ENCODE measurements at regions of chr17 and their contacts with region 1.

Region 1: GRCh38 chr17:76278952-76279741 is 14.0 kb downstream of the UBALD2 start:
- DNase-seq: peak; percentile 92
- ATAC-seq: peak; percentile 81
- H3K4me3 Mint-ChIP-seq: no peak overlapping the region
- H3K27ac Mint-ChIP-seq: no peak overlapping the region
- H3K4me1 Mint-ChIP-seq: peaks cover 25% of the 10 kb centered on the region
- H3K27me3 Mint-ChIP-seq: no peaks in the 10 kb centered on the region

Region 2: GRCh38 chr17:75904749-75905521 is 374.2 kb before region 1 on chr17 and contains the start of gene MRPL38:
- CTCF ChIA-PET with region 1: no interaction called
- POLR2A ChIA-PET with region 1: no interaction called
- intact Hi-C with region 1: loop called in 1 of 2 experiments (anchors 10 kb)
- DNase-seq: peak; percentile 97
- ATAC-seq: peak; percentile 99
- H3K4me3 Mint-ChIP-seq: peak within 1 kb of the TSS; percentile 86
- H3K27ac Mint-ChIP-seq: peak within 1 kb of the TSS; percentile 89
- H3K4me1 Mint-ChIP-seq: peaks cover 5% of the 10 kb centered on the region
- H3K27me3 Mint-ChIP-seq: no peaks in the 10 kb centered on the region
- total RNA-seq, gene MRPL38: 98.0 to 115 TPM

Region 3: GRCh38 chr17:76077516-76078110 is 201.5 kb before region 1 on chr17:
- CTCF ChIA-PET with region 1: interaction called, 4 read pairs
- POLR2A ChIA-PET with region 1: interaction called, 12 read pairs
- intact Hi-C with region 1: no loop called
- DNase-seq: no peak
- ATAC-seq: no peak
- H3K4me3 Mint-ChIP-seq: no peak overlapping the region
- H3K27ac Mint-ChIP-seq: no peak overlapping the region
- H3K4me1 Mint-ChIP-seq: peaks cover 44% of the 10 kb centered on the region
- H3K27me3 Mint-ChIP-seq: peaks cover 40% of the 10 kb centered on the region

Region 4: DNA sequence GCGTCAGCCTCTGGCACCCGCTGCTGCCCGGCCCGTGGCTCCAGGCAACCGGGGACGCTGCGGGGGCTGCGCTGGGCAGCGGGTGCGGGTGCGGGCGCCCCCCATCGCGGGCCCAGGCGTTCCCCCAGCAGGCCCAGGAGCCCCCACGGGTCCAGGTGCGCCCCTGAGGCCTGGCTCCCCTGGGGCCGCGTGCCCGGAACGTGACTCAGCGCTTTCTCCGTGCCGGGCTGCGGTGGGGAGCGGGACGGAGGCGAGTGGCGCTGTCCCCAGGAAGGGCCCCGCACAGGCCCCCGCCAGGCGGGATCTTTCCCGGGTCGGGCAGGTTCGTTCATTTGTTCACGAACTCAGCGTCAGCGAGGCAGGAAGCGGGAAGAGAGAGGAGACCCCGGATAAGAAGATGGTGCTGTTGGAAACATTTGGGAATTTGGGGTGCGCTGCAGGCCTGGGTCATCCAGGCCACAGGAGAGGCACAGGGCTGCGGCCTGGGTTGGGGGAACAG is 157.2 kb before region 1 on chr17:
- CTCF ChIA-PET with region 1: interaction called, 150 read pairs
- POLR2A ChIA-PET with region 1: interaction called, 9 read pairs
- intact Hi-C with region 1: loop called (anchors 1 kb)
- DNase-seq: peak; percentile 61
- ATAC-seq: peak; percentile 20
- H3K4me3 Mint-ChIP-seq: no peak overlapping the region
- H3K27ac Mint-ChIP-seq: peak overlapping the region; percentile 80
- H3K4me1 Mint-ChIP-seq: peaks cover 14% of the 10 kb centered on the region
- H3K27me3 Mint-ChIP-seq: no peaks in the 10 kb centered on the region

Region 5: GRCh38 chr17:76141212-76142038 is 137.7 kb before region 1 on chr17 and contains the start of gene FOXJ1:
- CTCF ChIA-PET with region 1: interaction called, 29 read pairs
- POLR2A ChIA-PET with region 1: no interaction called
- intact Hi-C with region 1: no loop called
- DNase-seq: peak; percentile 93
- ATAC-seq: peak; percentile 80
- H3K4me3 Mint-ChIP-seq: peak within 1 kb of the TSS; percentile 64
- H3K27ac Mint-ChIP-seq: no peak within 1 kb of the TSS
- H3K4me1 Mint-ChIP-seq: peaks cover 51% of the 10 kb centered on the region
- H3K27me3 Mint-ChIP-seq: peaks cover 9% of the 10 kb centered on the region
- total RNA-seq, gene FOXJ1: 0.47 to 0.53 TPM

Region 6: GRCh38 chr17:76182016-76182764 is 97.0 kb before region 1 on chr17:
- CTCF ChIA-PET with region 1: interaction called, 40 read pairs
- POLR2A ChIA-PET with region 1: interaction called, 5 read pairs
- intact Hi-C with region 1: no loop called
- DNase-seq: peak; percentile 98
- ATAC-seq: peak; percentile 76
- H3K4me3 Mint-ChIP-seq: peak overlapping the region; percentile 6
- H3K27ac Mint-ChIP-seq: peak overlapping the region; percentile 90
- H3K4me1 Mint-ChIP-seq: peaks cover 66% of the 10 kb centered on the region
- H3K27me3 Mint-ChIP-seq: no peaks in the 10 kb centered on the region

Region 7: DNA sequence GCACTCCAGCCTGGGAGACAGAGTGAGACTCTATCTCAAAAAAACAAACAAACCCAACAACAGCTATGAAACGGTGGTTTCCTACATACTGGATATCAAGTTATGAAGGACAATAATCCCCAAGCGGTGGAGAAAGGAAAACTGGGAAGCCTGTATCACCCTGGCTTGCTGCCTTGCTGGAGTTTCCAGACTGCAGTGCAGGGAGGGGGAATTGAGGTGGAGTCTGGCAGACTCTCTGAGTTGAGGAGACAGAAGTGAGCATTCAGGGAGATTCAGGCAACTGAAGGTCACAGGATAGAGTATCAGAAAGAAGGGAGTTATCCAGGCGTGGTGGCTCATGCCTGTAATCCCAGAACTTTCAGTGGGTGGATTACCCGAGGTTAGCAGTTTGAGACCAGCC is 17.0 kb after region 1 on chr17:
- CTCF ChIA-PET with region 1: interaction called, 17 read pairs
- POLR2A ChIA-PET with region 1: no interaction called
- intact Hi-C with region 1: no loop called
- DNase-seq: no peak
- ATAC-seq: no peak
- H3K4me3 Mint-ChIP-seq: no peak overlapping the region
- H3K27ac Mint-ChIP-seq: no peak overlapping the region
- H3K4me1 Mint-ChIP-seq: no peaks in the 10 kb centered on the region
- H3K27me3 Mint-ChIP-seq: no peaks in the 10 kb centered on the region

Region 8: GRCh38 chr17:76370261-76370993 is 91.3 kb after region 1 on chr17:
- CTCF ChIA-PET with region 1: no interaction called
- POLR2A ChIA-PET with region 1: no interaction called
- intact Hi-C with region 1: no loop called
- DNase-seq: peak; percentile 35
- ATAC-seq: no peak
- H3K4me3 Mint-ChIP-seq: no peak overlapping the region
- H3K27ac Mint-ChIP-seq: no peak overlapping the region
- H3K4me1 Mint-ChIP-seq: peaks cover 4% of the 10 kb centered on the region
- H3K27me3 Mint-ChIP-seq: no peaks in the 10 kb centered on the region

Region 9: GRCh38 chr17:76408052-76408849 is 129.1 kb after region 1 on chr17:
- CTCF ChIA-PET with region 1: no interaction called
- POLR2A ChIA-PET with region 1: no interaction called
- intact Hi-C with region 1: no loop called
- DNase-seq: peak; percentile 84
- ATAC-seq: peak; percentile 90
- H3K4me3 Mint-ChIP-seq: no peak overlapping the region
- H3K27ac Mint-ChIP-seq: no peak overlapping the region
- H3K4me1 Mint-ChIP-seq: peaks cover 8% of the 10 kb centered on the region
- H3K27me3 Mint-ChIP-seq: no peaks in the 10 kb centered on the region

Region 10: GRCh38 chr17:76432712-76433336 is 153.7 kb after region 1 on chr17:
- CTCF ChIA-PET with region 1: no interaction called
- POLR2A ChIA-PET with region 1: no interaction called
- intact Hi-C with region 1: no loop called
- DNase-seq: no peak
- ATAC-seq: peak; percentile 44
- H3K4me3 Mint-ChIP-seq: no peak overlapping the region
- H3K27ac Mint-ChIP-seq: no peak overlapping the region
- H3K4me1 Mint-ChIP-seq: peaks cover 2% of the 10 kb centered on the region
- H3K27me3 Mint-ChIP-seq: no peaks in the 10 kb centered on the region

Region 11: DNA sequence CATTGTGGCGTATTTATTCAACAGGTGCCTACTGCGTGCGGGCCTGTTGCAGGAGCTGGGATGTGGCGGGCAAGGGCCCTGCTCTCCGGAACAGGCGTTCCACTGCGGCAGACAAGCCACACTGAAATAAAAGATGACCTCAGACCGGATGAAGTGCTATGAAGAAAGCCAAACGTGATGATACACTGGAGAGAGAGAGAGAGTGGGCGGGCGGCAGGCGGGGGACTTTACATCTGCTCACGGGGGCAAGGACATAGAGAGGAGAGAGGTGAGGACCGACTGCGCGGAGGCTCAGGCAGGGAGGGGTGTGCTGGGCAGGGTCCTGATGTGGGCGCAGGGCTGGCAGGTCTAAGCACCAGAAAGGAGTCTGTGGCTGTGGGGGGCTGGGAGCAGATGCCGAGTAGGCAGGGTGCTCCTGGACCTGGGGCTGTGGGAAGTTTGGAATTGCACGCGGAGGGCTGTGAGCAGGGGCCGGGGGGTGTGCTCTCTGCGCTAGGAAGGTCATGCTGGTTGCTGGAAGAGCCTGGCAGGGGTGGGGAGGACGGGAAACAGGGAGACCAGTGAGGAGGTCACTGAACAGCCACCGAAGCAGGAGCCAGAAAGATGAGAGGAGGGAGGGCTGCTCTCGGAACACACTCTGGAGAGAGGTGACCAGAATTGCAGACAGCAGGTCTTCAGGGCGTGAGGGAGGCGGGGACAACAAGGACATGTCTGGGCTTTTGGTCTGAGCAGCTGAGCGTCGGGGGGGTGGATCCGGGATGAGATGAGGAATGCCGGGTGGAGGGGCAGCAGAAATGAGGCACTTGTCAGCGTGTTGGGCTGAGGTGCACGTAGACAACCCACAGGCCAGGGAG is 421.7 kb after region 1 on chr17:
- CTCF ChIA-PET with region 1: no interaction called
- POLR2A ChIA-PET with region 1: no interaction called
- intact Hi-C with region 1: no loop called
- DNase-seq: no peak
- ATAC-seq: no peak
- H3K4me3 Mint-ChIP-seq: no peak overlapping the region
- H3K27ac Mint-ChIP-seq: no peak overlapping the region
- H3K4me1 Mint-ChIP-seq: peaks cover 6% of the 10 kb centered on the region
- H3K27me3 Mint-ChIP-seq: no peaks in the 10 kb centered on the region

Measured in activated CD4-positive, alpha-beta T cell treated with anti-CD3 and anti-CD28 coated beads for 36 hours (primary cell).